WTC11 (cell line): ENCODE measurements at regions of chr14 and their contacts with region 1.

Region 1: GRCh38 chr14:100900837-100901390 is 2.6 kb downstream of the RTL1 start:
- DNase-seq: peak; percentile 75
- ATAC-seq: peak; percentile 38
- H3K4me3 Mint-ChIP-seq: peak overlapping the region; percentile 65
- H3K27ac Mint-ChIP-seq: peak overlapping the region; percentile 60; the same call in 1 of the 2 replicates
- H3K4me1 Mint-ChIP-seq: peaks cover 63% of the 10 kb centered on the region
- H3K27me3 Mint-ChIP-seq: peaks cover 62% of the 10 kb centered on the region
- CTCF ChIP-seq: 0 out of 2 replicates have a peak, but pooled peaks have one; percentile 13

Region 2: DNA sequence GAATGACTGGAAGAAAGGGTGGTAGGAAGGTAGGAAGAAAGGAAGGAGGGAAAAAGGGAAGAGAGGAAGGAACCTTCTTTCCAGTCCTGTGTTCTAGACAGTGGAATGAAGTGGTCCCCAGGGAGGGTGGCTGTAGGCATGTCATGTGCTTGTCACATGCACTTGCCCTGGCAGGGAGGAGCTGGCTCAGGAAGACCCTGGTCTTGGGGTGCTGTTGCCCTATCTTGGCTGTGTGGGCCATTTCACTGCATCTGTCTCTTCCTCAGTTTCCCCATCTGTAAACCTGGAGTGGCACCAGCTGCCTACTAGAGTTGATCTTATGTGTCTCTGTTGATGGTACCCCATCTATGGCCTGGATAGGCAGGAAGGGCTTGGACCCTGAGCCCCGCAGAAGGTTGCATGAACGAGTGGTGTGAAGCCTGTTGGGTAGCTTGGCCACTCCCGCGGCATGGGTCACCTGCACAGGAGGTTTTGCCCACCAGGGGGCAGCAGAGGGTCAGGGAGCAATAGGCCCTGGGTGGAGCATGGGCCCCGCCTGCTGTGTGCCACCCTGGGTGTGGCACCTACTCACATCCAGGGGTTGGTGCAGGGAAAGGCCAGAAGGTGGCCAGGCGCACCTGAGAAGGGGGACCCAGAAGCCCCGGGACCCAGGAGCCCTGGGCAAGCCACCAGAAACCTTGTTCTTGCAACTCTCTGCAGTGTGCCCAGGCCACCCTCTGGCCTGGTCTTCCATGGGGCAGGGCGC is 49.9 kb before region 1 on chr14:
- CTCF ChIA-PET with region 1: interaction called, 35 read pairs
- POLR2A ChIA-PET with region 1: no interaction called
- DNase-seq: peak; percentile 86
- ATAC-seq: peak; percentile 93
- H3K4me3 Mint-ChIP-seq: no peak overlapping the region
- H3K27ac Mint-ChIP-seq: no peak overlapping the region
- H3K4me1 Mint-ChIP-seq: peaks cover 7% of the 10 kb centered on the region
- H3K27me3 Mint-ChIP-seq: no peaks in the 10 kb centered on the region
- CTCF ChIP-seq: peak; percentile 93